Motor neuron (in vitro differentiated cells): ENCODE measurements at regions of chr11 and their contacts with region 1.

Region 1: DNA sequence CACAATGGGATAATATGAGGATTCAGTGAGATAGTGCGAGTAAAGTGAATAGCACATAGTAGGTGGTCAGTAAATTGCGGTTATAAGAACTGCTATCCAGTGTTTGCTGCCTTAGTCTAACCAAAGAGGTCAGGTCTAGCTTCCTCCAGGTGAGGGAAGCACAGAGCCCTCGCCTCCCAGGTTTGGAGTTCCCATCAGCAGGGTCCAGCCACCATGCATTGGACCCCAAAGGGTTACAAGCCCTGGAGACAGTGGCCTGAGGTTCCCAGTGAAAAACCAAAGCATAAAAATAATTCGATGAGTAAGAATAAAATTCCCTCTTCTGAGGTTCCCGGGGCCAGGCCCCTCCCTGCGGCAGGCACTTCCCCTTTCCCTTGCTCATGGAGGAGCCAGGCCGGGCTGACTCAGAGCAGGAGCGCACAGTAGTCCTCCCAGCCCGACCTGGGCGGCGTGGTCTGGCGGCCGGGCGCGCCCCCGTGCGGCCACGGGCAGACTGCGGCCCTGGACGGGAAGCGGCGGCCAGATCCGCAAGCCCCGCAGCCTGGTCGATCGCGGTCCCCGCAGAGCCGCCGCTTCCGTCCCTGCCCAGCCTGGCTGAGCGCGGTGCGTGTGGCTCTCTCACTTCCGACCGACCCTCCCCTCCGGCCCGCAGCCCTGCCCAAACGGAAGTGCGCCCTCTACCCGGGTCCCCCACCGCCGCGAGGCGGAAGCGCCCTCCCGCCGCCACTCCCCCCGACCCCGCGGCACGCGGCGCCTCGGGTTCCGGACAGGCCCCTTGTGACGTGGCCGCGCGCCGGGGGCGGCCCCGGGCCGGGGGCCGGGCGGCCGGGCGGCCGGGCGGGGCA is at the start of gene SLC39A13:
- ATAC-seq: peak; percentile 78 to 95 (median 93)
- H3K4me3 ChIP-seq: peak within 1 kb of the TSS; percentile 61 to 84 (median 69)
- H3K27ac ChIP-seq: peak within 1 kb of the TSS; percentile 83 to 93
- H3K4me1 ChIP-seq: peaks cover 16 to 17% of the 10 kb centered on the region in 2 donors
- total RNA-seq, gene SLC39A13: 13.8 to 31.6 (median 20.9) TPM

Region 2: DNA sequence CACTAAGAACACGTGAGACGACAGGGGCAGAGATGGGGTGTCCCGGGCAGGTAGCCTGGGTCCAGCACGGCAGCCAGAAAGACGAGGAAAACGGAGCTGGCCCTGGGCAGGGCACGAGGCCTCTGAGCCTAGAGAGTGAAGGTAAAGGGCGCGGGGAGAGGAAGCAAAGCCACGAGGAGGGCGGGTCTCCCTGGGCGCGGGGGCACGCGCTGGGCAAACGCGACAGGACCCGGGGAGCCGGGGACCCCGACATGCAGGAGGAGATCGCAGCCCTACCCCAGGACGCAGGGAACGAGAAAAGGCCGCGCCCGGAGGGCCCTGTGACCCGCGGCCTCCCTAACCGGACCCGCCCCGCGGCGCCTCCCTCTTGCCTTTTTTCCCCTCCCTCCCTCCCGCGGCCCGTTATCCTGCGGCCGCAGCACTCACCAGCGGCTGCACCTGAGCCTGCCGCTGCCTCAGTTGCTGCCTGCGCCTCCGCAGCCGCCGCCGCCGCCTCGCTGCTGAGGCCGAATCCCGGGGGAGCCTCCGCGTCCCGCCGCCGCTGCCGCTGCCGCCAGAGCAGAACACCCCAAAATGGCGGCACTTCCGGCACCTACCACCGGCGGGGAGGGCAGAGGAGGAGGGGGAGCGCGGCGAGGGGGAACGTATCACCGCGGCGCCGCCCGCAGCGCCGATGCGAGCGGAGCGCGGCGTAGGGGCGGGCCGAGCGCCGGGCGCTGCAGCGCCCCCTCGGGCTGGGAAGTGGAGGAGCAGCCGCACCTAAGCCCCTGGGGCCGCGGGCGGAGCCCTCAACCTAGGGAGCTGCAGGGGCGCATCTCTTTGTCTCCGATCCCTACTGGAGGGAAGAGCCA is 144.8 kb after region 1 on chr11 and contains the start of gene CELF1:
- in situ Hi-C with region 1: loop called in 1 of 9 experiments (anchors 25 kb)
- ATAC-seq: peak; percentile 89 to 97 (median 95)
- H3K4me3 ChIP-seq: peak within 1 kb of the TSS; percentile 59 to 90 (median 75)
- H3K27ac ChIP-seq: peak within 1 kb of the TSS; percentile 83 to 94
- H3K4me1 ChIP-seq: peaks cover 14 to 19% of the 10 kb centered on the region in 2 donors
- total RNA-seq, gene CELF1: 47.2 to 125 (median 106) TPM